T-cell (primary cell): ENCODE measurements at regions of chr14 and their contacts with region 1.

Region 1: DNA sequence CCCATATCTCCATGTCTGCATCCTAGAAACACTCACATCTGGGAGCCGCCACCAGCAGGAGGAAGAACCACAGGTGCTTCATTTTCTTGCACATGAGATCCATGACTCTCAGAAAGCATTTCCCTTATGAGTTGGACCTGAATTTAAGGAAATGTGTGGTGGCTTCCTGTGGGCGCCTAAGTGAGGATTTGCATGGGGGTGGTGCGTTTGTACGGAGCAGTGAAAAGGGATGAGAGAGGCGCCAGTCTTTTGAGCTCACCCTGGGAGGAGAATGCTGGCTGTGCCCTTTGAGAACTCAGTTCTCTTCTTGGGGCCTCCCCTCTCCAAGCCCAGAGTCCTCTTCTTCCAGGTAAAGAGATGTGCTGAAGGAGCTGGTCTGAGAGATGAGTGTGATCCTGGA is 895.7 kb downstream of the TMEM121 start:
- DNase-seq: no peak
- ATAC-seq: no peak
- H3K4me3 ChIP-seq: no peak overlapping the region
- H3K4me3 Mint-ChIP-seq: no peak overlapping the region
- H3K27ac ChIP-seq: no peak overlapping the region
- H3K27ac Mint-ChIP-seq: no peak overlapping the region
- H3K4me1 ChIP-seq: peaks cover 0 to 7% of the 10 kb centered on the region in 2 experiments
- H3K4me1 Mint-ChIP-seq: peaks cover 0 to 27% (median 5%) of the 10 kb centered on the region in 3 donors
- H3K27me3 ChIP-seq: peaks cover 0 to 12% of the 10 kb centered on the region in 2 experiments
- H3K27me3 Mint-ChIP-seq: peaks cover 13 to 27% of the 10 kb centered on the region in 2 donors

Region 2: GRCh38 chr14:105020815-105021655 is 1401.0 kb before region 1 on chr14 and contains the start of gene CDCA4:
- CTCF ChIA-PET with region 1: no interaction called
- POLR2A ChIA-PET with region 1: no interaction called
- DNase-seq: peak; percentile 92 to 99 (median 97)
- ATAC-seq: peak; percentile 85 to 90 (median 86)
- H3K4me3 ChIP-seq: peak within 1 kb of the TSS; percentile 63 to 87
- H3K4me3 Mint-ChIP-seq: peak within 1 kb of the TSS; percentile 90 to 96 (median 92)
- H3K27ac ChIP-seq: peak within 1 kb of the TSS; percentile 80
- H3K27ac Mint-ChIP-seq: peak within 1 kb of the TSS; percentile 94
- H3K4me1 ChIP-seq: peaks cover 12 to 64% of the 10 kb centered on the region in 2 experiments
- H3K4me1 Mint-ChIP-seq: peaks cover 46 to 84% (median 73%) of the 10 kb centered on the region in 3 donors
- H3K27me3 ChIP-seq: no peaks in the 10 kb centered on the region
- H3K27me3 Mint-ChIP-seq: no peaks in the 10 kb centered on the region
- total RNA-seq, gene CDCA4: 13.0 to 20.1 (median 15.8) TPM

Region 3: GRCh38 chr14:106013879-106014376 is 408.1 kb before region 1 on chr14:
- CTCF ChIA-PET with region 1: interaction called in 1 of 2 experiments, 16 read pairs
- POLR2A ChIA-PET with region 1: no interaction called
- DNase-seq: peak in 2 of 35 experiments; percentile 10 to 27
- ATAC-seq: peak in 3 of 4 experiments; percentile 35 to 89 (median 43)
- H3K4me3 ChIP-seq: no peak overlapping the region
- H3K4me3 Mint-ChIP-seq: no peak overlapping the region
- H3K27ac ChIP-seq: no peak overlapping the region
- H3K27ac Mint-ChIP-seq: peak overlapping the region; percentile 28 to 29
- H3K4me1 ChIP-seq: peaks cover 11 to 12% of the 10 kb centered on the region in 2 experiments
- H3K4me1 Mint-ChIP-seq: peaks cover 23 to 28% (median 26%) of the 10 kb centered on the region in 3 donors
- H3K27me3 ChIP-seq: peaks cover 0 to 9% of the 10 kb centered on the region in 2 experiments
- H3K27me3 Mint-ChIP-seq: peaks cover 0 to 6% of the 10 kb centered on the region in 2 donors